ENCODE measurements at regions of chr1 and their contacts with region 1.

Region 1: GRCh38 chr1:16009030-16009709 is 5.1 kb downstream of the SRARP start:
- DNase-seq: peak in 1 of 2 donors; percentile 89
- H3K4me3 ChIP-seq: no peak overlapping the region
- H3K27ac ChIP-seq: no peak overlapping the region
- H3K4me1 ChIP-seq: peaks cover 9 to 18% of the 10 kb centered on the region in 2 donors
- H3K27me3 ChIP-seq: no peaks in the 10 kb centered on the region
- CTCF ChIP-seq: peak; percentile 97 to 98 (median 98)

Region 2: DNA sequence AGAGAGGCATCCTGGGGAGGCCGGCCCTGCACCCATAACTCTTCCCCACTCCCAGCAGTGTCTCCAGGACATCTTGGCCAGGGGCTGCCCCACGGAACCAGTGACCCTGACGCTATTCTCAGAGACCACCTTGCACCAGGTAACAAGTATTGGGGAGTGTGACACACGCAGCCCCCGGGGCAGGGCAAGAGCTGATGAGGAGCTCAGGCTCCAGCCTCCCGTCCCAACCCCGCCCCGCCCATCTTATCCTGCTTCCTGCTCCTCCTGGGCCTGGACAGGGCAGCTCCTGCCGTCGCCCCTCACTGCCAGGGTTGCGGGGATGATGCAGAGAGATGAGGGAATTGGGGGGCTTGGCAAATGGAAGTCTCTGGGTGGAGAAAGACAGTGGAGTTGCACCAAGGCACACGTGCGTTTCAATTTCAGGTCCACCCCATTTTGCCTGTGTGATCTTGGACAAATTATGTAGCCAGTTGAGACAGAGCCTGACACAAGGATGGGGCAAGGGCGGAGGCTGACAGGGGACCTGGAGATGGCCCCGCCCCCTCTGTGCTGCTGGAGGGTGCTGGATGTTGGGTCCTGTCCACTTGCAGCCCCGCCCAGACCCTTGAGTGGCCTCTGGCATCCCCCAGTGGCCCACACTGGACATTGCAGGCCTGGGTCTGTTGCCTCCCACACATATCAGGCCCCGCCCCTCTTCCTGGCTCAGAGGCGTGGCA is 23.4 kb after region 1 on chr1:
- intact Hi-C with region 1: loop called (anchors 1 kb)
- DNase-seq: peak; percentile 59 to 94
- H3K4me3 ChIP-seq: no peak overlapping the region
- H3K27ac ChIP-seq: no peak overlapping the region
- H3K4me1 ChIP-seq: peaks cover 2 to 6% of the 10 kb centered on the region in 2 donors
- H3K27me3 ChIP-seq: no peaks in the 10 kb centered on the region
- CTCF ChIP-seq: peak; percentile 100

Region 3: GRCh38 chr1:16055613-16056520 is 46.7 kb after region 1 on chr1:
- intact Hi-C with region 1: loop called (anchors 1 kb)
- DNase-seq: peak; percentile 28 to 92
- H3K4me3 ChIP-seq: no peak overlapping the region
- H3K27ac ChIP-seq: no peak overlapping the region
- H3K4me1 ChIP-seq: no peaks in the 10 kb centered on the region
- H3K27me3 ChIP-seq: no peaks in the 10 kb centered on the region
- CTCF ChIP-seq: peak; percentile 93 to 94 (median 94)

Measured in ascending aorta (tissue), 2 donors.